ENCODE measurements at regions of chr10 and their contacts with region 1.

Region 1: DNA sequence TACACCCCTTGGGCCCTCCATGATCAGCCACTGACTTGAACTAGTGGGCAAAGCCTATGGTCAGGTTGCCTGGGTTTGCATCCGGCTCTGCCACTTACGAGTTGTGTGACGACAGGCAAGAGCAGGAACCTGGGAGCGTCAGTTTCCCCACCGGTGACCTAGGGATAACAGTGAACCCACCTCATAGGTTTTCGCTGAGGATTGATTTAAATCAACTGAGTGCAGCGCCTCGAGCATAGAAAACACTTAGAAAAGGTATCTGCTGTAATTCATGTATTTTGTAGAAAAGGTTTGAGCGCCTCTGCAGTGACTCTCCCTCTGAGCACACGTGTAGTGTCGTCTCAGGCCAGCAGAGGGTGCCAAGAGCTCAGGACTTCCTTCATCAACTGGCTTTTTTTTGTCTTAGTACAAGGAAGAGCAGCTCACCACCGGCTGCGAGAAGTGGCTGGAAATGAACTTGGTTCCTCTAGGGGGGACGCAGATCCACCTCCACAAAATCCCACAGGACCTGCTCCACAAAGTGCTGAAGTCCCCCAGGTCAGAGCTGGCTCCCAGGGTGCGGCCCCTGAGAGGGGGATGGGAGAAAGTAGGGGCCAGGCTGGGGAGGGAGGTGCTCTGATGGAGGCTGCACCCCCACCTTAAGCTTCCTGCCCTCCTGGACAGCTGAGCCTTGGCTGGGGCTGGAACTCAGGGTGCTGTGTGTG is 27.7 kb downstream of the BTBD16 start:
- DNase-seq: peak; percentile 86
- H3K4me3 Mint-ChIP-seq: no peak overlapping the region
- H3K27ac Mint-ChIP-seq: no peak overlapping the region
- H3K4me1 Mint-ChIP-seq: peaks cover 38% of the 10 kb centered on the region
- H3K27me3 Mint-ChIP-seq: no peaks in the 10 kb centered on the region
- CTCF ChIP-seq: peak; percentile 82

Region 2: GRCh38 chr10:122114156-122114747 is 184.5 kb before region 1 on chr10:
- CTCF ChIA-PET with region 1: no interaction called
- POLR2A ChIA-PET with region 1: no interaction called
- intact Hi-C with region 1: no loop called
- DNase-seq: no peak
- H3K4me3 Mint-ChIP-seq: peak overlapping the region; percentile 85
- H3K27ac Mint-ChIP-seq: peak overlapping the region; percentile 90
- H3K4me1 Mint-ChIP-seq: peaks cover 43% of the 10 kb centered on the region
- H3K27me3 Mint-ChIP-seq: no peaks in the 10 kb centered on the region
- CTCF ChIP-seq: no peak

Region 3: GRCh38 chr10:122232769-122233168 is 66.0 kb before region 1 on chr10:
- CTCF ChIA-PET with region 1: no interaction called
- POLR2A ChIA-PET with region 1: no interaction called
- intact Hi-C with region 1: no loop called
- DNase-seq: no peak
- H3K4me3 Mint-ChIP-seq: no peak overlapping the region
- H3K27ac Mint-ChIP-seq: no peak overlapping the region
- H3K4me1 Mint-ChIP-seq: no peaks in the 10 kb centered on the region
- H3K27me3 Mint-ChIP-seq: no peaks in the 10 kb centered on the region
- CTCF ChIP-seq: no peak

Region 4: GRCh38 chr10:122342293-122343134 is 43.8 kb after region 1 on chr10:
- CTCF ChIA-PET with region 1: interaction called, 12 read pairs
- POLR2A ChIA-PET with region 1: interaction called, 3 read pairs
- intact Hi-C with region 1: loop called (anchors 1 kb)
- DNase-seq: peak; percentile 72
- H3K4me3 Mint-ChIP-seq: no peak overlapping the region
- H3K27ac Mint-ChIP-seq: no peak overlapping the region
- H3K4me1 Mint-ChIP-seq: peaks cover 12% of the 10 kb centered on the region
- H3K27me3 Mint-ChIP-seq: no peaks in the 10 kb centered on the region
- CTCF ChIP-seq: peak; percentile 54

Region 5: DNA sequence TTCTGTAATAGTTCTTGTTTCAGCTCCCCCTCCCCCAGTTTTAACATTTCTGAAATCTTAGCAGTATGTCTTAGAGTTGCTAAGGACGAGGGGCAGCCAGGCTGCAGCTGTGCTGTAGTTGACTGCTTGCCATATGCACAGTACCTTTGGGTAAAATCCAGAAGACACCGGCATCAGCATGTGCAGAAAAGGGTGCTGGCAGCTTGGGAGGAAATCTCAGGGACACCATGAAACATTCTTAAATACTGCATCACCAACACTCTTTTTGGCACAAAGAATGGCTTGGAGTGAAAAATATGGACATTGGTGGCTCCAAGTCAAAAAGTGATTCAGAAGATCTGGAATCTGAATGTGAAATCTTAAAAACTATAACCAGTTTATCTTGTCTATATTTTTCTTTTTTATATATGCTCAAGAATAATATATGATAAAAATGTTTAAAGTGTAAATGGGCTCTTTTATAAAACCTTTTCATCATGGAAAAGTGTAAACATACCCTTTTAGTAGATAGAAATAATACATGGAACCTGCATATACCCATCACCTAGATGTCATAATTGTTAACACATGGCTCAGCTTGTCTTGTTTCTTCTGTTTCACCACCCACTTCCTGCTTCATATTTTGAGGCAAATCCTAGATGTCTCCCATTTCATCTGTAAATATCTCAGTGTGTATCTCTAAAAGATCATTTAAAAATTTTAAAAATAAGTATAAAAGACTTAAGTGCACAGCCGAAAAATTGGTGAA is 121.3 kb after region 1 on chr10:
- CTCF ChIA-PET with region 1: interaction called, 10 read pairs
- POLR2A ChIA-PET with region 1: interaction called, 4 read pairs
- intact Hi-C with region 1: no loop called
- DNase-seq: peak; percentile 81
- H3K4me3 Mint-ChIP-seq: peak overlapping the region; percentile 52
- H3K27ac Mint-ChIP-seq: peak overlapping the region; percentile 91
- H3K4me1 Mint-ChIP-seq: peaks cover 44% of the 10 kb centered on the region
- H3K27me3 Mint-ChIP-seq: no peaks in the 10 kb centered on the region
- CTCF ChIP-seq: no peak

Region 6: GRCh38 chr10:122441961-122442360 is 143.2 kb after region 1 on chr10:
- CTCF ChIA-PET with region 1: interaction called, 15 read pairs
- POLR2A ChIA-PET with region 1: no interaction called
- intact Hi-C with region 1: no loop called
- DNase-seq: peak; percentile 74
- H3K4me3 Mint-ChIP-seq: peak overlapping the region; percentile 43
- H3K27ac Mint-ChIP-seq: peak overlapping the region; percentile 85
- H3K4me1 Mint-ChIP-seq: peaks cover 14% of the 10 kb centered on the region
- H3K27me3 Mint-ChIP-seq: no peaks in the 10 kb centered on the region
- CTCF ChIP-seq: no peak

Region 7: GRCh38 chr10:122519873-122520272 is 221.1 kb after region 1 on chr10:
- CTCF ChIA-PET with region 1: no interaction called
- POLR2A ChIA-PET with region 1: no interaction called
- intact Hi-C with region 1: no loop called
- DNase-seq: no peak
- H3K4me3 Mint-ChIP-seq: no peak overlapping the region
- H3K27ac Mint-ChIP-seq: no peak overlapping the region
- H3K4me1 Mint-ChIP-seq: peaks cover 13% of the 10 kb centered on the region
- H3K27me3 Mint-ChIP-seq: no peaks in the 10 kb centered on the region
- CTCF ChIP-seq: no peak